PC-9 (cell line): ENCODE measurements at regions of chr22 and their contacts with region 1.

Region 1: DNA sequence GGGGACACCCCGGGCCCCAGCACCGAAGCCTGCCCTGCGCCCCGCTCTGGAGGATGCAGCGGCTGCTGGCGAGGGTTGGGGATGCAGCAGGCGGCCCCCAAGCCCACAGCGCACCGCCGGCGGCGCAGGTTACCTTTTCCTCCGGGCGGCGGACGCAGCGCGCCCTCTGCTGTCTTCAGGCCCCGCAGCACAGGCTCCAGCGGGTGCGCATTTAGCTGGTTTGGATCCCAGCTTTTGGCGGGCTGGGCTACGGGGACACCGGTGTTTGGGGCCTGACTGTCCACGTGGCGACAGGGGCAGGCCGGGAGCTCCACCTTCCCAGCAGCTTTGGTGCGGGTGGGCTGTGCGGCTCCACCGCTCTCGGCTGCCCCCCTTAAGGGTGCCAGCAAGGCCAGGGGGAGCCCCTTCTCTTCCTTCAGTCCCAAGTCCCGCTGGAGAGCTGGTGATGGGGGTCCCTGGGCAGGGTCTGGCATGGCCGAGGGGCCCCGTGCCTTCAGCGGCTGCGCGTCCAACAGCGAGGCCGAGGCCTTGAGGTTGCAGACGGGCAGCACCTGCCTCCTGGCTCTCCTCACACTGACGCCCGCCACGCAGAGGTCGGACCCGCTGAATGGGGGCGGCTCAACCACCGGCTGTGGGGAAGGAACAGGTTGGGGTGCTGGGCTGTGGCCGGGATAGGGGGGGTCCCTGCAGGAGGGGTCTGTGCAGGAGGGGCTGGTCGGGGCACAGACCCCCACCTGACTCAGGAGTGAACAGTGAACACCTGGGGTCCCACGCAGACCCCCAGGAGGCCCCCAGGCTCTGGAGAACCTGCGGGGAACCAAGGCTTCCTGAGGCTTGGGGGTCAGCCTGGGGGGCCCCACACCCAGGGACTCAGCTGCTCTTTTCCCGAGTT is 18.0 kb upstream of the IL17REL start:
- DNase-seq: peak; percentile 70 to 84
- H3K4me3 ChIP-seq: no peak overlapping the region
- H3K27ac ChIP-seq: no peak overlapping the region
- H3K4me1 ChIP-seq: peaks cover 13% of the 10 kb centered on the region
- H3K27me3 ChIP-seq: peaks cover 58% of the 10 kb centered on the region
- CTCF ChIP-seq: peak; percentile 94

Region 2: DNA sequence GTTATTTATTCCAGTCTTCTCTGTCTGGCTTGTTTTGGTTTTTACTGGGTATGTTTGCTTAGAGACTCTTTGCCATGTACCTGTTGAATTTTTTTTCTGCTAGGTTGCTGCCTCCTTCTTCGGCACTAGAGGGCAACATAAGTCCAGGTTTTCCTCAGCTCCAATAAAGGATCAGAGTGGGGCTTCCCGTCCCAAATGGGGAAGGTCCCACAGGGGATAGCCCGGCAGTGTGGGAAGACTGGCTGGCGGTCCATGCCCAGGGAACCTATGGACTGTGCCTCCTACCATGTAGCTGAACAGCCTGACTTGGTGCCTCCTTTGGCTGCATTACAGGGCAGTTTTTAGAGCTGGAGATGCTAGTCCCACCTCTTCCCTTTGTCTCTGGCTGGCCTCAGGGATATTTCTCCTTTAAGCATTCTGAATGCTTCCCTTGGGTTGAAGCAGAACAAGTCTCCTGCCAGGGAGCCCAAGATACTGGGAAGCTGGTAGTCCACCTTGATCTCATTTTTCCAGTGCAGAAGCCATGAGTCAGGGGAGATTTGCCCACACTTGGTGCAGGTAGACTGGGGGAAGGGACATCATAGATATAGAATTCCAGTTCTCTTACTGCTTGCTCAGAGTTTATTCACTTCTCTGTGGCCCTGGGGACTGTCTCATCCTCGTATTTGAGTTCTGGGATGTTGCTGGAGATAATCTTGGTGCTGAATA is 263.0 kb before region 1 on chr22:
- CTCF ChIA-PET with region 1: interaction called, 5 read pairs
- POLR2A ChIA-PET with region 1: no interaction called
- intact Hi-C with region 1: loop called (anchors 1 kb)
- DNase-seq: peak; percentile 40 to 53
- H3K4me3 ChIP-seq: no peak overlapping the region
- H3K27ac ChIP-seq: no peak overlapping the region
- H3K4me1 ChIP-seq: no peaks in the 10 kb centered on the region
- H3K27me3 ChIP-seq: peaks cover 13% of the 10 kb centered on the region; the same call in 1 of the 2 replicates
- CTCF ChIP-seq: peak; percentile 97

Region 3: GRCh38 chr22:49861642-49862495 is 168.7 kb before region 1 on chr22:
- CTCF ChIA-PET with region 1: no interaction called
- POLR2A ChIA-PET with region 1: no interaction called
- intact Hi-C with region 1: no loop called
- DNase-seq: no peak
- H3K4me3 ChIP-seq: no peak overlapping the region
- H3K27ac ChIP-seq: no peak overlapping the region
- H3K4me1 ChIP-seq: no peaks in the 10 kb centered on the region
- H3K27me3 ChIP-seq: no peaks in the 10 kb centered on the region
- CTCF ChIP-seq: no peak

Region 4: GRCh38 chr22:49936018-49936952 is 94.3 kb before region 1 on chr22:
- CTCF ChIA-PET with region 1: interaction called, 12 read pairs
- POLR2A ChIA-PET with region 1: no interaction called
- intact Hi-C with region 1: loop called (anchors 1 kb)
- DNase-seq: peak; percentile 75 to 97
- H3K4me3 ChIP-seq: peak overlapping the region; percentile 53; the same call in 1 of the 2 replicates
- H3K27ac ChIP-seq: no peak overlapping the region
- H3K4me1 ChIP-seq: peaks cover 26% of the 10 kb centered on the region
- H3K27me3 ChIP-seq: no peaks in the 10 kb centered on the region
- CTCF ChIP-seq: no peak

Region 5: GRCh38 chr22:49960159-49961004 is 70.2 kb before region 1 on chr22 and contains the start of gene PIM3:
- CTCF ChIA-PET with region 1: interaction called, 14 read pairs
- POLR2A ChIA-PET with region 1: no interaction called
- intact Hi-C with region 1: loop called (anchors 2 kb)
- DNase-seq: peak; percentile 95 to 96
- H3K4me3 ChIP-seq: peak within 1 kb of the TSS; percentile 97
- H3K27ac ChIP-seq: peak within 1 kb of the TSS; percentile 66
- H3K4me1 ChIP-seq: peaks cover 36% of the 10 kb centered on the region
- H3K27me3 ChIP-seq: no peaks in the 10 kb centered on the region
- CTCF ChIP-seq: no peak
- total RNA-seq, gene PIM3: 67.0 and 84.8 TPM in 2 replicates

Region 6: GRCh38 chr22:49979587-49980264 is 50.8 kb before region 1 on chr22:
- CTCF ChIA-PET with region 1: interaction called, 15 read pairs
- POLR2A ChIA-PET with region 1: no interaction called
- intact Hi-C with region 1: no loop called
- DNase-seq: no peak
- H3K4me3 ChIP-seq: no peak overlapping the region
- H3K27ac ChIP-seq: no peak overlapping the region
- H3K4me1 ChIP-seq: no peaks in the 10 kb centered on the region
- H3K27me3 ChIP-seq: no peaks in the 10 kb centered on the region
- CTCF ChIP-seq: peak; percentile 89

Region 7: DNA sequence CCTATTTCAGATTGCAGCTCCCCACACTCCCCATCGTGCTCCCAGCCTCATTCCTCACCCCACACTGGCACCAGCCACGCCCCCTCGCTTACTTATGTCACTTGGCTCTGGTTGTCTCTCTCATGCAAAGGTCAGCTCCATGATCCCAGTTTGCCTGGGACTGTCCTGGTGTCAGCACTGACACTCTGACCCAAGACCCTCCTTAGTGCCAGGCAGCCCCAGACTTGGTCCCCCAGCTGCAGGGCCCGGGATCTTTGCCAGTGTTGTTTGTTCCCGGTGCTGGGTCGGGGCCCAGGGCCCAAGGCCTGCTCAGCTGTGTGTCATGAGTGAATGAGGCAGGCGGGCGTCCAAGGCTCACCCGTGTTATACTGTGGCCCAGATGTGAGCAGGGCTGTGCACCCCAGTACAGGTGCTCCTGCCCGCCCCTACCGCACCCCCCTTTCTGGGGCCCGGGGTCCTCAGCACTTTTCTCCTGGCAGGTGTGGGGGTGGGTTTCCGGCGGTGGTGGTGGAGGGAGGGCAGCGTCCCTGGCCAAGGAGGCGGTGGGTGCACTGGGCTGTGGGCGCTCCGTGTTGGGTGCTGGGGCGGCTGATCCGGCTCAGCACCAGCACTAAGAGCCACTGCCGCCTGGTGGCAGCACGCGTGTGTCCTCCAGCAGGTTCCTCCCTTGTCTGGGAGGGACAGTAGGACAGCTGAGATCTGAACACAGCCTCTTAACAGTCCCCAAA is 37.5 kb before region 1 on chr22:
- CTCF ChIA-PET with region 1: interaction called, 3 read pairs
- POLR2A ChIA-PET with region 1: interaction called, 31 read pairs
- intact Hi-C with region 1: loop called (anchors 5 kb)
- DNase-seq: peak; percentile 32 to 52
- H3K4me3 ChIP-seq: no peak overlapping the region
- H3K27ac ChIP-seq: no peak overlapping the region
- H3K4me1 ChIP-seq: no peaks in the 10 kb centered on the region; the same call in none of the 2 replicates
- H3K27me3 ChIP-seq: peaks cover 37% of the 10 kb centered on the region
- CTCF ChIP-seq: peak; percentile 87

Region 8: DNA sequence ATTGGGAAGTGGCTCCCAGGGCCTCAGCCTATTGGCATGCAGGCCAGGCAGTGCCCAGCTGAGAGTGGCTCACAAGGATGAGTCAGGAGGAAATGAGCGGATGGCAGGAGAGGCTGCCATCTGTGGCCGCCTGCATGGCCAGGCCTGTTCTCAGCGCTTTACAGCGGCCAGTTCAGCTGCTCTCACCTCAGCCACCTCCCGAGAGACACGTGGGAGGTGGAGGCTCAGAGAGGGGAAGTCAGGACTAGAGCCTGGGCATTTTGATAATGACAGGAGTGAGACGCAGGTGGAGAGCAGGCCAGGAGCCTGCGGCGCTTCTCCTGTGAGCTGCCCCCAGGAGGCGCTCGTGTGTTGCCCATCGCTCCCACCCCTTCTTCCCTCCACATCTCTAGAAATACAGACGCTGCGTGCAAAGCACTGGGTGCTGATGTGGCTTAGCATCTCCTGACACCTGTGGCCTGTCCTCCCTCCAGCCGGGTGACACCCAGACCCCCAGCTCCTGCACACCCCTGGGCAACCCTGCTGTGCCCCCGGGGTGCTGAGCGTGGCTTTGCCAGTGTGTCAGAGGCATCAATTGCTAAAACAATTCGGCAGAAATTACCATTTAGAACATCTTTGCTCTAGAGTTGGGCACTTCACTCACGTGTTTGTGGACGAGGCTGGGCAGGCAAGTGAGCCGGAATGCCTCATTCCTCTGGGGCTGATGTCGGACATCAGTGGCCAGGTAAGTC is 118.6 kb after region 1 on chr22:
- CTCF ChIA-PET with region 1: no interaction called
- POLR2A ChIA-PET with region 1: no interaction called
- intact Hi-C with region 1: loop called (anchors 10 kb)
- DNase-seq: peak; percentile 86 to 89
- H3K4me3 ChIP-seq: no peak overlapping the region
- H3K27ac ChIP-seq: no peak overlapping the region
- H3K4me1 ChIP-seq: no peaks in the 10 kb centered on the region
- H3K27me3 ChIP-seq: peaks cover 4% of the 10 kb centered on the region; the same call in 1 of the 2 replicates
- CTCF ChIP-seq: peak; percentile 95

Region 9: GRCh38 chr22:50525390-50526068 is 495.0 kb after region 1 on chr22 and contains the start of gene SCO2:
- CTCF ChIA-PET with region 1: no interaction called
- POLR2A ChIA-PET with region 1: no interaction called
- intact Hi-C with region 1: no loop called
- DNase-seq: peak; percentile 94 to 97
- H3K4me3 ChIP-seq: peak within 1 kb of the TSS; percentile 96
- H3K27ac ChIP-seq: peak within 1 kb of the TSS; percentile 56
- H3K4me1 ChIP-seq: peaks cover 23% of the 10 kb centered on the region
- H3K27me3 ChIP-seq: no peaks in the 10 kb centered on the region
- CTCF ChIP-seq: peak; percentile 31; the same call in 1 of the 2 replicates
- total RNA-seq, gene SCO2: 3.0 and 6.1 TPM in 2 replicates